MCF 10A (cell line): ENCODE measurements at regions of chr5 and their contacts with region 1.

Region 1: DNA sequence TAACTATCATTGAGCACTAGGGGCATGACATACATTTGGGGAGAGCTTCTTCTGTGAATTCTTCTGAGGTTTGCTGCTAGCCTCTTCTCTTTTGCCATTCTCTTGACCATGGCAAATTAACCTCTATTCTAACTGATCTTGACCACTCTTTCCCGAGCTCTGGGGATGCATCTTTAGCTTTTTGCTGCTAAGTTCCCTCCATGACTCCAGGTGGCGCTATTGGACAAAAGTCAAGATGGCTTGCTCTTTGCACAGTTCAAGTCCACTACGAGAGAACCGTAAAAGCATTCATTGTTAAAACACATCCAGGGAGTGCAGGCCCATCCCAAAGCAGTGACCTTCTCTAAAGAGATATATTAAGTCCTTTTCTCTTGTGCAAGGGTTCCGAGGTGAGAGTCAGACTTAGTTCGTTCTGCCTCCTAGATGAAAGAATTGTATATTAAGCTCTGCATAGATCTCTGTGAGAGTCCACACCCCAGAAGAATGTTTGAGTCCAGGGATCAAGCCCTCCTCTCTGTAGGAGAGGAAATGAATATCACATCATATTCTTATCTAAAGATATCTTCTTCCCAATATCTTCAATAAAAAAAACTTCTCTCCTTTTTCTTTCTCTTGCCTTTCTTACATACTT is 1152.9 kb upstream of the CDH6 start:
- DNase-seq: peak; percentile 84
- H3K4me3 Mint-ChIP-seq: no peak overlapping the region
- H3K27ac Mint-ChIP-seq: no peak overlapping the region
- H3K4me1 Mint-ChIP-seq: peaks cover 8% of the 10 kb centered on the region
- H3K27me3 Mint-ChIP-seq: no peaks in the 10 kb centered on the region
- CTCF ChIP-seq: peak; percentile 82

Region 2: DNA sequence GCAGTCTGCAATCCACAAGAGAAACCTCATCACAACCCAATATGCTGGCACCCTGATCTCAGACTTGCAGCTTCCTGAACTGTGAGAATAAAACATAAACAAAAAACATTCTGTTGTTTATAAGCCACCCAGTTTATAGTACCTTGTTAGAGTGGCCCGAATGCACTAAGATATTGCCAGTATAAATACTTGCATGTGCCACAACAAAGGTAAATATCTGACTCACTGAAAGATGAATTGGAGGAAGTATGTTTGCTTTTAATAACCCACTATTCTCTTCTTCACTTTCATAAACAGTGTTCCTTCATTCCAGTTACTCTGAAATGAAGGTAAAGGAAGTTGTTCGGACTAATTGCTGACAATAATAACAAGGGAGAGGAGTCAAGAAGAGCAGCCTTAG is 10.5 kb before region 1 on chr5:
- CTCF ChIA-PET with region 1: interaction called, 10 read pairs
- POLR2A ChIA-PET with region 1: no interaction called
- intact Hi-C with region 1: no loop called
- DNase-seq: peak; percentile 8
- H3K4me3 Mint-ChIP-seq: no peak overlapping the region
- H3K27ac Mint-ChIP-seq: no peak overlapping the region
- H3K4me1 Mint-ChIP-seq: peaks cover 8% of the 10 kb centered on the region
- H3K27me3 Mint-ChIP-seq: no peaks in the 10 kb centered on the region
- CTCF ChIP-seq: no peak

Region 3: GRCh38 chr5:30287890-30288289 is 247.3 kb after region 1 on chr5:
- CTCF ChIA-PET with region 1: no interaction called
- POLR2A ChIA-PET with region 1: no interaction called
- intact Hi-C with region 1: no loop called
- DNase-seq: no peak
- H3K4me3 Mint-ChIP-seq: no peak overlapping the region
- H3K27ac Mint-ChIP-seq: no peak overlapping the region
- H3K4me1 Mint-ChIP-seq: peaks cover 5% of the 10 kb centered on the region
- H3K27me3 Mint-ChIP-seq: no peaks in the 10 kb centered on the region
- CTCF ChIP-seq: no peak

Region 4: DNA sequence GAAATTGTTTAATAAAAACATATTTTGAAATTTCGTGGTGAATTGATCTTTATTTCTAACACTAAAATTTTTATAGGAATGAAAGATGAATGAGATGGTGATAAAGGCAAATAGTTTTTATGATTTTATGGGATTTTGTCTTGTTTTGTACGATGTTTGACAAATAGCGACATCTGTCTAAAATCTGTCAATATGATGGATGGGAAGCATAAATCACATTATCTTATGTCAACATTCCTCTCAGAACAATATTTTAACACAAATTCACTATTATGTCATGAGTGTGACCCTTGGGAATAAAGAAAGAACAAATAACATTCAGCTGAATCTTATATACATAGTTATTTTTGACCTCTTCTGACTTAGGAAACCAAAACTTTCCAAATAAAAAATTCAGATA is 300.9 kb after region 1 on chr5:
- CTCF ChIA-PET with region 1: no interaction called
- POLR2A ChIA-PET with region 1: no interaction called
- intact Hi-C with region 1: no loop called
- DNase-seq: no peak
- H3K4me3 Mint-ChIP-seq: no peak overlapping the region
- H3K27ac Mint-ChIP-seq: no peak overlapping the region
- H3K4me1 Mint-ChIP-seq: peaks cover 13% of the 10 kb centered on the region
- H3K27me3 Mint-ChIP-seq: no peaks in the 10 kb centered on the region
- CTCF ChIP-seq: no peak

Region 5: GRCh38 chr5:30401479-30402058 is 361.0 kb after region 1 on chr5:
- CTCF ChIA-PET with region 1: interaction called, 31 read pairs
- POLR2A ChIA-PET with region 1: interaction called, 3 read pairs
- intact Hi-C with region 1: loop called (anchors 2 kb)
- DNase-seq: peak; percentile 68
- H3K4me3 Mint-ChIP-seq: no peak overlapping the region
- H3K27ac Mint-ChIP-seq: no peak overlapping the region
- H3K4me1 Mint-ChIP-seq: peaks cover 4% of the 10 kb centered on the region
- H3K27me3 Mint-ChIP-seq: no peaks in the 10 kb centered on the region
- CTCF ChIP-seq: peak; percentile 59

Region 6: GRCh38 chr5:31186672-31187267 is 1146.2 kb after region 1 on chr5:
- CTCF ChIA-PET with region 1: interaction called, 25 read pairs
- POLR2A ChIA-PET with region 1: no interaction called
- intact Hi-C with region 1: loop called (anchors 1 kb)
- DNase-seq: peak; percentile 64
- H3K4me3 Mint-ChIP-seq: no peak overlapping the region
- H3K27ac Mint-ChIP-seq: no peak overlapping the region
- H3K4me1 Mint-ChIP-seq: no peaks in the 10 kb centered on the region
- H3K27me3 Mint-ChIP-seq: no peaks in the 10 kb centered on the region
- CTCF ChIP-seq: peak; percentile 63

Region 7: DNA sequence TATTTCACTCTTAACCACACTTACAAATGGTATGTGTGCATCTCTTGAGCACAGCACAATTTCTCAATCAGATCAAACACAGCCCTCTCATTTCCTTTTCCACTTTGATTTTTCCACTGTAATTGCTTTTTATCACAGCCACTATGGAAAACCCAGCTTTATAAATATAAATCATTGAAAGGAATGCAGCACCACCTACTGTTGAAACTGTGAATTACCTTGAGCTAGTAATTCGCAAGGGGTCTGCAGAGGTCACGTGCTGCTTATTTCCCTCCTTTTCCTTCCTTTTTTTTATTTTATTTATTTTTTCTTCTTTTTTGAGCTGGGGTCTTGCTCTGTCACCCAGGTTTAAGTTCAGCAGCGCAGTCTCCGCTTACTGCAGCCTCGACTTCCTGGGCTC is 1229.8 kb after region 1 on chr5:
- CTCF ChIA-PET with region 1: interaction called, 4 read pairs
- POLR2A ChIA-PET with region 1: no interaction called
- intact Hi-C with region 1: loop called (anchors 1 kb)
- DNase-seq: peak; percentile 36
- H3K4me3 Mint-ChIP-seq: no peak overlapping the region
- H3K27ac Mint-ChIP-seq: no peak overlapping the region
- H3K4me1 Mint-ChIP-seq: peaks cover 6% of the 10 kb centered on the region
- H3K27me3 Mint-ChIP-seq: no peaks in the 10 kb centered on the region
- CTCF ChIP-seq: peak; percentile 70